ENCODE measurements at regions of chr16 and their contacts with region 1.

Region 1: DNA sequence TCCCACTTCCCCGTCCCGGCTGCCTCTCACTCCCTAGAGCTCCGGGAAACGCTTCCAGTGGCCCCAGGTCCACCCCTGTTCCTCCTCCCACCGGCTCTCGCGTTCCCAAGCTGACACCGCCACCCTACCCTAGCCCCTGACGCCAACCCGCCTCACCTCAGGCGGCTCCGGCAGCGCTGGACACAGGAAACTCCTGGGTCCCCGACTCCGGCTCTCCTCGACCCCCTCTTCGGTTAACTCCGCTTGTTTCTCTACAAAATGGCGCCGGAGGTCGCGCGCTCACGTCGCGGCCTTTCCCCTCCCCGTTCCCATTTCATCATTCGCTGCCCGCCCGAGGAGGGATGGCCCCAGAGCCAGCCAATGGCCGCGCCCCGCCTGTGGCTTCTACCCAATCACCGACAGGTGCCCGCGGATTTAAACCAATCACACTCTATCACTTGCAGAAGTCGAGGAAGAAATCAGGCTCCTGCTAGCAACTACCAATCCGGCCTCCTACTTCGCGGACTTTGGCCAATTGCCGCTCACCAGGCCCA is at the start of gene CNOT1:
- DNase-seq: peak; percentile 99
- H3K4me3 ChIP-seq: peak within 1 kb of the TSS; percentile 89 to 99
- H3K4me3 Mint-ChIP-seq: peak within 1 kb of the TSS; percentile 97 to 100 (median 100)
- H3K27ac ChIP-seq: peak within 1 kb of the TSS; percentile 100
- H3K27ac Mint-ChIP-seq: peak within 1 kb of the TSS; percentile 99 to 100 (median 100)
- H3K4me1 ChIP-seq: peaks cover 33% of the 10 kb centered on the region
- H3K4me1 Mint-ChIP-seq: peaks cover 14 to 46% (median 29%) of the 10 kb centered on the region in 4 donors
- H3K27me3 ChIP-seq: no peaks in the 10 kb centered on the region
- H3K27me3 Mint-ChIP-seq: no peaks in the 10 kb centered on the region
- total RNA-seq, gene CNOT1: 251 to 262 TPM

Region 2: GRCh38 chr16:58392215-58393137 is 237.2 kb before region 1 on chr16 and contains the start of gene GINS3:
- CTCF ChIA-PET with region 1: no interaction called
- POLR2A ChIA-PET with region 1: interaction called, 4 read pairs
- intact Hi-C with region 1: loop called (anchors 1 kb)
- DNase-seq: peak; percentile 77 to 82 (median 80)
- H3K4me3 ChIP-seq: peak within 1 kb of the TSS; percentile 99
- H3K4me3 Mint-ChIP-seq: peak within 1 kb of the TSS; percentile 98 to 100 (median 99)
- H3K27ac ChIP-seq: peak within 1 kb of the TSS; percentile 75
- H3K27ac Mint-ChIP-seq: peak within 1 kb of the TSS; percentile 90 to 100 (median 97)
- H3K4me1 ChIP-seq: peaks cover 7% of the 10 kb centered on the region
- H3K4me1 Mint-ChIP-seq: peaks cover 3 to 20% (median 13%) of the 10 kb centered on the region in 4 donors
- H3K27me3 ChIP-seq: no peaks in the 10 kb centered on the region
- H3K27me3 Mint-ChIP-seq: no peaks in the 10 kb centered on the region
- total RNA-seq, gene GINS3: 1.3 to 2.2 TPM

Region 3: GRCh38 chr16:58451945-58452401 is 177.7 kb before region 1 on chr16:
- CTCF ChIA-PET with region 1: no interaction called
- POLR2A ChIA-PET with region 1: no interaction called
- intact Hi-C with region 1: no loop called
- DNase-seq: no peak
- H3K4me3 ChIP-seq: no peak overlapping the region
- H3K4me3 Mint-ChIP-seq: no peak overlapping the region
- H3K27ac ChIP-seq: no peak overlapping the region
- H3K27ac Mint-ChIP-seq: no peak overlapping the region
- H3K4me1 ChIP-seq: no peaks in the 10 kb centered on the region
- H3K4me1 Mint-ChIP-seq: no peaks in the 10 kb centered on the region
- H3K27me3 ChIP-seq: no peaks in the 10 kb centered on the region
- H3K27me3 Mint-ChIP-seq: peaks cover 10 to 17% of the 10 kb centered on the region in 2 donors

Region 4: DNA sequence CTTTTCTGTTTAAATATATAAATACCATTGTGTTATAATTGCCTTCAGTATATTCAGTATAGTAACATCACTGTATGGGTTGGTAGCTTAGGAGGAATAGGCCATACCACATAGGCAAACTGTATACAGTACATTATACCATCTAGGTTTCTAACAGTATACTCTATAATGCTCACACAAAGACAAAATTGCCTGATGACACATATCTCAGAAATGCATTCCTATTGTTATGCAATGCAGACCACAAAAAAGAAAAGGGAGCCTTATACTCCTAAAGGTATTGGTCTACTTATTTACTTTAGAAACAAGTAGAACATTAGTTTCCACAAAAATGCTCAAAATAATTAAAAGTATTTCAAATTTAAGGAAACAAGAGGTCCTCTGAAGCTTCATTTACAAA is 66.4 kb before region 1 on chr16:
- CTCF ChIA-PET with region 1: no interaction called
- POLR2A ChIA-PET with region 1: no interaction called
- intact Hi-C with region 1: loop called (anchors 10 kb)
- DNase-seq: no peak
- H3K4me3 ChIP-seq: no peak overlapping the region
- H3K4me3 Mint-ChIP-seq: no peak overlapping the region
- H3K27ac ChIP-seq: no peak overlapping the region
- H3K27ac Mint-ChIP-seq: peak overlapping the region in 1 of 7 donors; percentile 21
- H3K4me1 ChIP-seq: no peaks in the 10 kb centered on the region
- H3K4me1 Mint-ChIP-seq: peaks cover 0 to 13% (median 5%) of the 10 kb centered on the region in 4 donors
- H3K27me3 ChIP-seq: no peaks in the 10 kb centered on the region
- H3K27me3 Mint-ChIP-seq: no peaks in the 10 kb centered on the region

Region 5: DNA sequence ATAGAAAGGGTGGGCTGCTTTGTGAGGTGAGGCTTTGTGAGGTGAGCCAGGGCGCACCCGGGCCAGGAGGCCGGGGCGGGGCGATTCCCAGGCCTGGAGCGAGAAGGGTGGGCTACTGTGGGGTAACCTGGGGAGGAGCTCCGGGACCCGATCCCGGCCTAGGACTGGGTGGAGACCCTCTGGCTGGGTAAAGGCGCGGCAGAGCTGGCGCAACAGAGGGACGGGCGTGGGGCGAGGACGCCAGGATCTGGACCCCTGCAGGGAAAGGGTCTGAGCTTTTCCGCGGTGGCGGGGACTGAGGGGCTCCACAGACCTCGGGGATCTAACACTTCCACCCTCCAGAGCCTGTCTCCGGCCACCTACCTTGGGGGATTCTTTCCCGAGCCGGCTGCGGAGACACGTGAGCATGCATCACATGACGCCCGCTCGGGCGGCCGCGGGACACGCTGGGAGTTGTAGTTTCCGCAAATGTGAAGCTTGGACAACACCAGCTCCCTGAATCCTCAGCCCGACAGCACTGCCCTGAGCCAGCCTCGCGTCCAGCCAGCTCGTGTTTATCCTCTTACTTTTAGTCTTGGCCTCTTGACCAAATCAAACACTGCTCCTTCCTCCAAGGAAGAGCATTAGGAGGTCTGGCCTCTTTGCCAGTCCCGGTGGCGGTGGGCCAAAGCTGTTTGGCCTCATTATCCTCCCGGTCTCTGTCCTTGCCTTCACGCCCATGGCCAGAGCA is 54.9 kb after region 1 on chr16 and contains the start of gene SLC38A7:
- CTCF ChIA-PET with region 1: no interaction called
- POLR2A ChIA-PET with region 1: interaction called, 12 read pairs
- intact Hi-C with region 1: loop called (anchors 1 kb)
- DNase-seq: peak; percentile 58 to 70 (median 60)
- H3K4me3 ChIP-seq: peak within 1 kb of the TSS; percentile 46 to 82
- H3K4me3 Mint-ChIP-seq: peak within 1 kb of the TSS; percentile 88 to 93 (median 92)
- H3K27ac ChIP-seq: peak within 1 kb of the TSS; percentile 55
- H3K27ac Mint-ChIP-seq: peak within 1 kb of the TSS; percentile 38 to 91 (median 89)
- H3K4me1 ChIP-seq: peaks cover 20% of the 10 kb centered on the region
- H3K4me1 Mint-ChIP-seq: peaks cover 11 to 22% (median 18%) of the 10 kb centered on the region in 4 donors
- H3K27me3 ChIP-seq: no peaks in the 10 kb centered on the region
- H3K27me3 Mint-ChIP-seq: peaks cover under 1% of the 10 kb centered on the region in 2 donors
- total RNA-seq, gene SLC38A7: 11.4 to 13.8 TPM

Region 6: DNA sequence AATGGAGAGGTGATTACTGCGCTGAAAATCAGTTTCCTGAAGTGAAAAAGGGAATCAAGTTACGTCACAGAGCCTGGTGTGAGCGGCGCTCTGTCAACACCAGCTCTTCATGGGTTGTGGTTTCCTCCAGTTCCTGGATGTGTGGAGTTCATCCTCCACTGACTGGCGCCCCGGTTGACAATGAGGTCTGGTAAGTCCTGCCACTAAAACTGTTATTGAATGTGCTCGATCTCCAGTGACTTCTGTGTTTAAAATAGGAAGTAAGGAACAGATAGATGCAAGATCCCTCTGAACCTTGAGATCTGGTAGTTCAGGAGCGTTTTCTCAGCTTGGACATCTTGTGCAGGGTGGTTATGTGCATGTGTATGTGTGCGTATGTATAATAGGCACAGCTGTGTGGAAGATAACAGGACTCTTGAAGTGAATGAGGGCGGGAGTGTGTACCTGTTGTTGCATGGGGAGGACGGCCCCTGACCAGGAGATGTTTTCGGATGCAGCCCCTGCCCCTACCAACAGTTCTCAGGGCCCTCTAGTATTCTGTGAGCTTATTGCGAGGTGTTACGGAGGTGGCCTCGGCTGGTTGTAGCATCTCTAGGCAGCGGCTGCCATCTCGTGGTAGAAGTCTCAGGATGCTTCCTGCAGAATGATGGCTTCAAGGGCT is 126.5 kb after region 1 on chr16:
- CTCF ChIA-PET with region 1: interaction called, 3 read pairs
- POLR2A ChIA-PET with region 1: no interaction called
- intact Hi-C with region 1: loop called (anchors 1 kb)
- DNase-seq: peak; percentile 75 to 85 (median 76)
- H3K4me3 ChIP-seq: peak overlapping the region in 1 of 2 donors; percentile 5
- H3K4me3 Mint-ChIP-seq: peak overlapping the region; percentile 22 to 81 (median 76)
- H3K27ac ChIP-seq: peak overlapping the region; percentile 25
- H3K27ac Mint-ChIP-seq: peak overlapping the region; percentile 63 to 95 (median 88)
- H3K4me1 ChIP-seq: peaks cover 8% of the 10 kb centered on the region
- H3K4me1 Mint-ChIP-seq: peaks cover 8 to 11% (median 10%) of the 10 kb centered on the region in 4 donors
- H3K27me3 ChIP-seq: no peaks in the 10 kb centered on the region
- H3K27me3 Mint-ChIP-seq: no peaks in the 10 kb centered on the region